PC-3 (cell line): ENCODE measurements at regions of chr12 and their contacts with region 1.

Region 1: GRCh38 chr12:8127138-8127537 is 3.7 kb downstream of the CLEC4A start:
- DNase-seq: no peak
- ATAC-seq: no peak
- H3K4me3 ChIP-seq: no peak overlapping the region
- H3K27ac ChIP-seq: no peak overlapping the region
- H3K4me1 ChIP-seq: no peaks in the 10 kb centered on the region
- H3K27me3 ChIP-seq: no peaks in the 10 kb centered on the region
- CTCF ChIP-seq: no peak

Region 2: GRCh38 chr12:8453021-8453513 is 325.9 kb after region 1 on chr12:
- CTCF ChIA-PET with region 1: no interaction called
- POLR2A ChIA-PET with region 1: no interaction called
- intact Hi-C with region 1: loop called (anchors 10 kb)
- DNase-seq: no peak
- ATAC-seq: no peak
- H3K4me3 ChIP-seq: no peak overlapping the region
- H3K27ac ChIP-seq: no peak overlapping the region
- H3K4me1 ChIP-seq: no peaks in the 10 kb centered on the region
- H3K27me3 ChIP-seq: peaks cover 3% of the 10 kb centered on the region; the same call in 1 of the 2 replicates
- CTCF ChIP-seq: no peak